ENCODE measurements at regions of chr2 and their contacts with region 1.

Region 1: DNA sequence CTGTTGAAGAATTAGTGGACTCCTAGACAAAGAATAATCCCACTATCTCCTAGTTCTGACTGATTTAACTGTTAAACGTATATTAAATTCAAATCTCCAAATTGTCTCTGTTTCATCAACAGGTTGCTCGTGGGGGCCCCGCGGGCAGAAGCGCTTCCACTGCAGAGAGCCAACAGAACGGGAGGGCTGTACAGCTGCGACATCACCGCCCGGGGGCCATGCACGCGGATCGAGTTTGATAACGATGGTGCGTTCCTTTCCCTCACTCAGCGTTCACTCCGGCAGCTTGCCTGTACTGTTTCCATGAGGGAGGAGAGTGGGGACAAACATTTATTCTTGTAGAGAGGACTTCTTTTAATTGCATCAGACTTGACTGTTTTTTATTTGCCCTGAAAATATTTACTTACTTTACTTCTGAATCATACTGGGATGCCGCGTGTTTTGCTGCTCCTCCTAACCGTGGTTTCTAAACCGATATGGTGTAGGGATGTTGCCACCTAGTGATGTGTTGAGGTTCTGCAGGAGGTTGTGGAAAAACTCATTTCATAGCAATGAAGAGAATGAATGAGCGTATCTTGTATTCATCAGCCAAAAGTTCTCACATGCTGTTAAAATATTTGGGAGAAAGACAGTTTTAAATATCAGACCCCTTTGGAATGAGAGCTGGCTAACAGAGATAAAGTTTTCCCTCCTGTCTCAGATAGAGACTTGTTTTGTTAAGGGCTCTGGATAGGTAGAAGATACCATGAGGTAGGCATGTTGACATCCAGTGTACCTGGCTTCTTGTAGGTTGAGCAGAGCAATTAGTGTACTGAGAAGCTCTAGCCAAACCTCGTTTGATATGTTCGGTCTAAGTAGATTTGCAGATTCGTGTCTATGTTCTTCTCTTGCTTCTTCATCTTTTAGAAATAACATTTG is 38.3 kb downstream of the ITGA6 start:
- DNase-seq: peak; percentile 72
- H3K4me3 ChIP-seq: peak overlapping the region; percentile 44
- H3K27ac ChIP-seq: no peak overlapping the region
- H3K27me3 ChIP-seq: no peaks in the 10 kb centered on the region
- CTCF ChIP-seq: peak; percentile 86

Region 2: GRCh38 chr2:172102391-172103278 is 363.0 kb before region 1 on chr2 and contains the start of gene DLX2:
- CTCF ChIA-PET with region 1: interaction called, 16 read pairs
- POLR2A ChIA-PET with region 1: no interaction called
- DNase-seq: peak; percentile 57
- H3K4me3 ChIP-seq: peak within 1 kb of the TSS; percentile 76
- H3K27ac ChIP-seq: no peak within 1 kb of the TSS
- H3K27me3 ChIP-seq: peaks cover 2% of the 10 kb centered on the region
- CTCF ChIP-seq: no peak
- polyA plus RNA-seq, gene DLX2: 0.10 and 0.24 TPM in 2 replicates

Region 3: DNA sequence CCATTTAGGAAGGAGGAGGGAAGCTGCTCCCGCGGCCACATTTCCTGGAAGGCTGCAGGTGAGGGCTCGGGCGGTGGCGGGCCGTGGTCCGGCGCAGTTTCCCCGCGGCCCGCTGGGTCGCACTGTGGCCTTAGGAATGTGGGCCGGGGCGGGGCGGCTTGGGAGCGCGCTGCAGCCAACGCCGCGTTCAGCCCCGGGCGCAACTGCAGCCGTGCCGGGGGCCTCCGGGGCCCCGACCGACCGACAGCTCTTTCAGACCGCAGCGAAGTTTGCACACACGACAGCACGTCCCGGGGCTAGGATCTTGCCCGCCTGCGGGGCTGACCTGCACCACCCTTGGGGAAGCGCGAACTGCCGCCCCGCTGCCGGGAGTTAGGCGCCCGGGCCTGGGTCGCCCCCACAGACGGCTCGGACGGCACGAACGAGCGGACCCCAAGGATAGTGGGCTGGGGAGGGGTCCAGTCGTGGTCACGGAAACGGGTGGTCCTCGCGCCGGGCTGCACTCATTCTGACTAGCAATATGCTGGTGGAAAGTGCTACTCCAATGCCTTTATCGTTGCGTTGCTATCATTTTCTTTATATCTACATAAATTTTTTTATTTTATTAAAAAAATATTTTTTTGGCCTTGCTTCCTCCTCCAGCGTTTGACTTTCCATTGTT is 293.0 kb before region 1 on chr2:
- CTCF ChIA-PET with region 1: interaction called, 154 read pairs
- POLR2A ChIA-PET with region 1: no interaction called
- DNase-seq: no peak
- H3K4me3 ChIP-seq: peak overlapping the region; percentile 74
- H3K27ac ChIP-seq: no peak overlapping the region
- H3K27me3 ChIP-seq: peaks cover 2% of the 10 kb centered on the region
- CTCF ChIP-seq: peak; percentile 78

Region 4: GRCh38 chr2:172208791-172209325 is 256.8 kb before region 1 on chr2:
- CTCF ChIA-PET with region 1: interaction called, 66 read pairs
- POLR2A ChIA-PET with region 1: no interaction called
- DNase-seq: no peak
- H3K4me3 ChIP-seq: no peak overlapping the region
- H3K27ac ChIP-seq: peak overlapping the region; percentile 47
- H3K27me3 ChIP-seq: no peaks in the 10 kb centered on the region
- CTCF ChIP-seq: no peak

Region 5: DNA sequence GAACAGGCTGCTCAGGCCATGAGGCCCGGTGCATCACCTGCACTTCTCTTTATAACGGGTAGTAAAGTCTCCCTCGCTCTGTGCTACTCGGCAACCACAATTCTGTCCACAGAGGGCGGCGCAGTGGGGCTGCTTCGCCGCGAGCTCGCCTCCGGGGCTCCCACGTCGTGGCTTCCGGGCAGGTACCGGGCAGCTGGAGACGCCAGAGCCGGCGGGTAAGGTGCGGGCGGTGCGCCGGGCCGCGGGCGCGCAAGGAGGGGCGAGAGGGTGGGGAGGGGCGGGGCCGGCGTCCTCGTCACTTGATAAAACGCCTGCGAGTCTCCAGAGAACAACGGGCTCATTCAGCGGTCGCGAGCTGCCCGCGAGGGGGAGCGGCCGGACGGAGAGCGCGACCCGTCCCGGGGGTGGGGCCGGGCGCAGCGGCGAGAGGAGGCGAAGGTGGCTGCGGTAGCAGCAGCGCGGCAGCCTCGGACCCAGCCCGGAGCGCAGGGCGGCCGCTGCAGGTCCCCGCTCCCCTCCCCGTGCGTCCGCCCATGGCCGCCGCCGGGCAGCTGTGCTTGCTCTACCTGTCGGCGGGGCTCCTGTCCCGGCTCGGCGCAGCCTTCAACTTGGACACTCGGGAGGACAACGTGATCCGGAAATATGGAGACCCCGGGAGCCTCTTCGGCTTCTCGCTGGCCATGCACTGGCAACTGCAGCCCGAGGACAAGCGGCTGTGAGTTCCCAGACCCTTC is 38.3 kb before region 1 on chr2 and contains the start of gene ITGA6:
- CTCF ChIA-PET with region 1: interaction called, 39 read pairs
- POLR2A ChIA-PET with region 1: interaction called, 6 read pairs
- DNase-seq: no peak
- H3K4me3 ChIP-seq: peak within 1 kb of the TSS; percentile 71
- H3K27ac ChIP-seq: no peak within 1 kb of the TSS
- H3K27me3 ChIP-seq: no peaks in the 10 kb centered on the region
- CTCF ChIP-seq: peak; percentile 23
- polyA plus RNA-seq, gene ITGA6: 14.8 and 17.9 TPM in 2 replicates

Region 6: GRCh38 chr2:172484253-172484652 is 18.6 kb after region 1 on chr2:
- CTCF ChIA-PET with region 1: interaction called, 20 read pairs
- POLR2A ChIA-PET with region 1: no interaction called
- DNase-seq: no peak
- H3K4me3 ChIP-seq: no peak overlapping the region
- H3K27ac ChIP-seq: no peak overlapping the region
- H3K27me3 ChIP-seq: no peaks in the 10 kb centered on the region
- CTCF ChIP-seq: peak; percentile 41; the same call in 1 of the 2 replicates

Region 7: DNA sequence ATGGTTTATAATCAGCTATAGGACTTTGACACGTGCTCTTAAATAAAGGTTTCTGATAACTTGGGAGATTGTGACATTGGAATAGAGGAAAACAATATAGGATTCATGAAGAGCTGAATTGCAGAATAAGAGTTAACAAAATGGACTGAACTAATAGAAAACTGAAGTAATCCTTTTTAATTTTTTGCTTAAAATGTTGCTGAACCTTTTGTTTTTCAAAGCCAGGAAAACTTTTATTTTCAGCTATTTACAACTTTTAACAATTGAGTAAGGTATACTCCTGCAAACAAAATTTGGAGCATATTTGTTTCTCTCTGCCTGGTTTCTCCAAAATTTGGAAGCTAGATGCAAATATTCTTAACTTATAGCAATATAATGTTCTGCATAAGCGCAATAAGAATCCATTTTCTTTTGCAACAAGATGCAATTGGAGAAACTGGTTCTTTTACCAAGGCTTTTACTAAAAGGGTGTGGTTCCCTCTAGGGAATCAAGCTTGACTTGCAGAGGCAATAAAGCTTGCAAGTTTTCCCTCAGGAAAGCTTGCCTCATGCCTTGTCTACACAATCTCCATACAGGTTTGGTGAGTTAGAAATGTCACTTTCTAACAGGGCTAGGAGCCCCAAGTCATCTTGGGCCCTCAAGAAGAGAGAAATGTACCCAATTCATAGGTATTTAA is 79.9 kb after region 1 on chr2:
- CTCF ChIA-PET with region 1: no interaction called
- POLR2A ChIA-PET with region 1: no interaction called
- DNase-seq: no peak
- H3K4me3 ChIP-seq: no peak overlapping the region
- H3K27ac ChIP-seq: no peak overlapping the region
- H3K27me3 ChIP-seq: no peaks in the 10 kb centered on the region
- CTCF ChIP-seq: no peak

Measured in AG04450 (cell line).